ENCODE measurements at regions of chr14 and their contacts with region 1.

Region 1: GRCh38 chr14:24817212-24818057 is 183.4 kb upstream of the GZMB start:
- DNase-seq: no peak
- ATAC-seq: peak; percentile 62

Region 2: GRCh38 chr14:24838945-24839616 is 21.6 kb after region 1 on chr14:
- intact Hi-C with region 1: loop called (anchors 2 kb)
- DNase-seq: no peak
- ATAC-seq: peak; percentile 83

Region 3: GRCh38 chr14:24883576-24883975 is 66.1 kb after region 1 on chr14:
- intact Hi-C with region 1: no loop called
- DNase-seq: no peak
- ATAC-seq: no peak

Region 4: DNA sequence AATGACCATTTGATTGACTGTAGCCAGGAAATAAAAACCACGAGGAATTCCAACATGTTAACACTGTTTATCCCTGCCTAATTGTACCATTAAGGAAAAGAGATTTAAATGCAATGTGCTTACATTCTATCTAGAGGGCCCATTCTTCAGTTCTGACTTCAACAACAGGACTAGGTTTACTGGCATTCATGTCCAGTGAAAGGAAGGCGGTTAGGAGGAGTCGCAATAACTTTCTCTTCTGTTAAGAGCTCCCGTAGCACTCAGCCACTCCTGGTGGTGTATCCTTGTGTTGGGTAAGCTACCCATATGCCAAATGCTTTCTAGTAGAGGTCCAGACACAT is 77.8 kb after region 1 on chr14:
- intact Hi-C with region 1: loop called (anchors 5 kb)
- DNase-seq: no peak
- ATAC-seq: no peak

Region 5: DNA sequence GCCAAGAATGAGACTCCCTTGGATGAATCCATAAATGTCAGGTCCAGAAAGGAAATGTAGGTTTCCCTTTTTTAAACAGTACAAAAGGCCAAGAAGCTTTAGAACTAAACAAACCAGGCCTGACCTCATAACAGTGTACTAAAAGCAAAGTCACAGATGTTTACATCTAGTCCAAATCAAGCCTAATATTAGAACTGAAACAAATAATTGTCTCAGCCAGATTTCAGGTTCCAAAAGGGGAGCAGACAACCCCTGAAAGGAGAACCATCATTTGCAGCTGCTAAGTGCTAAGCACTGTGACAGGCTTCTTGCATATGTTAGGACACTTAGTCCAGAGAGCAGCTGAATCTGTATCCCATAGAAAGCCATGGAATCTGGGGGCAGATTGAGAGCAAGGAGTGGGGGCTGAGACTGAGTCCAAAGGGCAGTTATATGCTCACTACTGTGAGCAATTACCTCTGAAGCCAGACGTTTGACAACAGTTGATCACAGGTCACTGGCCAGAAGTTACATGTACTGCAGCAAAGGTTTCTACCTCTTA is 142.4 kb after region 1 on chr14:
- intact Hi-C with region 1: loop called (anchors 5 kb)
- DNase-seq: no peak
- ATAC-seq: peak; percentile 67

Region 6: DNA sequence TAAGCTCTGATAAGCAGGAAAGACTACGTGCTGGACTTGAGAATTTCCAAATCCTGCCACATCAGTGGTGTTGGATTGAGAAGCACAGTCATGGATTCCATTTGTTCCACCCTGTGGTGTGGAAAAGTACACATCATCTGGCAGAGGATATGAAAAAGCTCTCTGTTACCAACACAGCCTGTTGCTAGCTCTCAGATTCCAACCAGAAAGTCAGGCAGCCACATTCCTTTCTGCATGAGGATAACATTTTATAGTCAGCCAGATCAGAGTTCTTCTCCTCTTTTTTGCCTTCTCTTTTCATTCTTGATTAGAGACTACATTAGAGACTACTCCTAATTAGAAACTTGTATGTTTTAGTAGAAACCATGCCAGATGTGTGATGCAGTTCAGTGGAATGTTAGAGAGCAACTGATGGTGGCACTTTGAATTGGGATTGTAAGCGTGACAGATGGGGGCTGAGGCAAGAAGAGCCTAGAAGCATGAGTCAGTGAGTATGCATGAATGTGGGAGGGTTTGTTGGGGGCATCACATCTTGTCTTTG is 293.7 kb after region 1 on chr14:
- intact Hi-C with region 1: loop called (anchors 2 kb)
- DNase-seq: no peak
- ATAC-seq: peak; percentile 98

Measured in Right ventricle myocardium inferior (tissue), 1 donor.